Activated CD4-positive, alpha-beta T cell treated with anti-CD3 and anti-CD28 coated beads, Interleukin-2, amount 10 ng/mL, durations not matched to agents 24 days and 14 days (primary cell): ENCODE measurements at regions of chr1 and their contacts with region 1.

Region 1: DNA sequence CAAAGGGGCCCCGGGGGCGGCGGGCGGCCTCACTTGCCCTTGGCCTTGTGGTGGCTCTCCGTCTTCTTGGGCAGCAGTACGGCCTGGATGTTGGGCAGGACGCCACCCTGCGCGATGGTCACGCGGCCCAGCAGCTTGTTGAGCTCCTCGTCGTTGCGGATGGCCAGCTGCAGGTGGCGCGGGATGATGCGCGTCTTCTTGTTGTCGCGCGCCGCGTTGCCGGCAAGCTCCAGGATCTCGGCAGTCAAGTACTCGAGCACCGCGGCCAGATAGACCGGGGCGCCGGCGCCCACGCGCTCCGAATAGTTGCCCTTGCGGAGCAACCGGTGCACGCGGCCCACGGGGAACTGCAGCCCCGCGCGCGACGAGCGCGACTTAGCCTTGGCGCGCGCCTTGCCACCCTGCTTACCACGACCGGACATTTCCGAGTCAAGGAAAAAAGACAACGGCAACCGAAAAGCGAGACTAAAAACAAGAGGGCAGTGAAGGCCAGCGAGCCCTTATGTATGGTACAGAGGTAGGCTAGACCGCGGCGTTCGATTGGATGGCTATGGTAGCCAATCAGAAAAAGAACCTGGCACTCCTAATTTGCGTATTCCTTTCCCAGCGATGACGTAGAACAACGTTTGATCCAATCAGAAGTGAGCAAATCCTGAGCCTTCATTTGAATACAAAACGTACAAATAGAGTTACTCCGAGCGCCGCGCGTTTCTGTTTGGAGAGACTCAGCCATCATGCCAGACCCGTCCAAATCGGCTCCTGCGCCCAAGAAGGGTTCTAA is 29.6 kb upstream of the RNF187 start:
- DNase-seq: peak; percentile 97
- H3K4me3 Mint-ChIP-seq: peak overlapping the region; percentile 97
- H3K27ac Mint-ChIP-seq: peak overlapping the region; percentile 99
- H3K4me1 Mint-ChIP-seq: peaks cover 47% of the 10 kb centered on the region
- H3K27me3 Mint-ChIP-seq: peaks cover 3% of the 10 kb centered on the region

Region 2: GRCh38 chr1:228378090-228378872 is 79.3 kb before region 1 on chr1:
- intact Hi-C with region 1: loop called (anchors 2 kb)
- DNase-seq: peak; percentile 89
- H3K4me3 Mint-ChIP-seq: peak overlapping the region; percentile 91
- H3K27ac Mint-ChIP-seq: no peak overlapping the region
- H3K4me1 Mint-ChIP-seq: peaks cover 6% of the 10 kb centered on the region
- H3K27me3 Mint-ChIP-seq: peaks cover 34% of the 10 kb centered on the region